ENCODE measurements at regions of chr6 and their contacts with region 1.

Region 1: DNA sequence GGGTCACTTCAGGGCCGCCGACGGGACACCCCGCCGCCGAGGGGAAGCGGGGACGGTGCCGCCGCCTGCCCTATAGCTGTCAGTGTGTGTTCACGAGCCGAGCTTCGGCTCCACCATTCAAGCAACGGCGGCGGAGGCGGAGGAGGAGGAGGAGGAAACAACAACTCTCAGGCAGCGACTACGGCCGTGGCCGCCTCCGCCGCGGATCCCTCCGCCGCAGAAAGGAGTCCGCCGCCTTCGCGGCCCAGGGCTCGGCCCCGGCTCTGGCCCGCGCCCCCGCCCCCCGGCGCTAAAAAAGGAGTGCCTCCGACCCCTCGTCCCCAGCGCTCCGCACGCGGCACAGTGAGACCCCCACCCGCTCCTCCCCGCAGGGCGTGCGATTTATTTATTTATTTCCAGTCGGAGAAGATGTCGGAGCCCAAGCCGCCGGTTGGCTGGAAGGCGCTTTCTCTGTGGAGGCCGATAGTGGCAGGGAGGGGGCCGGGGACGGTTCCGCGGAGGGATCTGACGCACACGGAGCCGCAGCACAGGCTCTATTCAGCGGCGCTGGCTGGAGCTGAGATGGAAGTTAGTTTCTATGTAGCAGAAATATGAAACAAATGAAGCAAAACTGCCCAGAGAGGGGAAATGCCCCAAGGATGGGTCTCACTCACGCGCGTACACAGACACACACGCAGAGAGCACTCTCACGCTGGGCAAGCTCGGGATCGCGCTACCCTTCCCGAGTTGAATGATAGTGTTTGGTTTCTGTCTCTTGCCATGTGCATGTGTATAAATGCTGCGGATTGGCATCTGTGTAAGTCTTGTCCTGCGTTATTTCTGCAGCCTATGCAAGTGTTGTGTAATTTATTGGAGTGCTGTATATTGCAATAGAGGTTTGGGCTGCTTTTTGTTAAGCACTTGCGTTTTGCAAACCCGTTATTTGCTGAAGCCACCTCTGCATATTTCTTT is at the start of gene PHIP:
- DNase-seq: peak; percentile 94
- H3K4me3 ChIP-seq: peak within 1 kb of the TSS; percentile 79
- H3K4me3 Mint-ChIP-seq: peak within 1 kb of the TSS; percentile 88
- H3K27ac Mint-ChIP-seq: peak within 1 kb of the TSS; percentile 96
- H3K4me1 ChIP-seq: no peaks in the 10 kb centered on the region; the same call in 1 of the 2 replicates
- H3K4me1 Mint-ChIP-seq: peaks cover 7% of the 10 kb centered on the region
- H3K27me3 ChIP-seq: no peaks in the 10 kb centered on the region
- H3K27me3 Mint-ChIP-seq: no peaks in the 10 kb centered on the region
- CTCF ChIP-seq: no peak
- total RNA-seq, gene PHIP: 31.2 and 32.6 TPM in 2 replicates

Region 2: DNA sequence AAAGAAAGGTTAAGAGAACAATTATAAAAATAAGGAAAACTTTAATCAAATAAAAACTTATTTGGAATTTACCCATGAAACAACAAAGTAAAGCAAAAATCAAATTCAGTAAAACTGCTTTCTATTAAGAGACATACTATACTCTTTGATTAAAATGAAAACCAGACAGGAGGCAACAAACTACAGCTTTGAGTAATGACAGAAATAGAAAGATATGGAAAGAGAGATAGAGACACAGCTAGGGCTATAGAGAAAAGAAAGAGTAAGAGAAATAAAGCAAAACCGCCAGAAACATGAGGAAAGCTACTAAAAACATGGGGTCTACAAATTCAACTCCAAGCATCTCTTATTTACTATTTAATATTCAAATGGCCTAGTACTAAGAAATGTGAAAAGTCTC is 67.9 kb before region 1 on chr6:
- CTCF ChIA-PET with region 1: no interaction called
- POLR2A ChIA-PET with region 1: no interaction called
- intact Hi-C with region 1: no loop called
- DNase-seq: no peak
- H3K4me3 ChIP-seq: no peak overlapping the region
- H3K4me3 Mint-ChIP-seq: no peak overlapping the region
- H3K27ac Mint-ChIP-seq: no peak overlapping the region
- H3K4me1 ChIP-seq: no peaks in the 10 kb centered on the region
- H3K4me1 Mint-ChIP-seq: no peaks in the 10 kb centered on the region
- H3K27me3 ChIP-seq: no peaks in the 10 kb centered on the region
- H3K27me3 Mint-ChIP-seq: no peaks in the 10 kb centered on the region
- CTCF ChIP-seq: no peak

Region 3: DNA sequence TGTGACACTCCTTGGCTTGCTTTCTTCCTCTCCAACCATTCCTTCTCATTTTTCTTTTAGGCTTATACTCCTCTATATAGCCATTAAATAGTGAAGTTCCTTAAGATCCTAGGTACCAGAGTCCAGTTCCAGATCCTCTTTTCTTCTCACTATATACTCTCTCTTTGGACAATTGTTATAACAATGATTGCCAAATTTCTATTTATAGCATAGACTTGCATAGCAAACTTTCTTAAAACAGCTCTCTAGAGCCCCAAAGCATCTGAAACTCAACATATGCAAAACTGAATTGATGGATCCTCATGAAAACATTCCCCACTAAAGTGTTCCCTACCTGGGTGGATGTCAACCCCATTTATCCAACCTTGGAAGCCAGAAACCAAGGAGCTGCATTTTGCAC is 13.7 kb before region 1 on chr6:
- CTCF ChIA-PET with region 1: no interaction called
- POLR2A ChIA-PET with region 1: interaction called, 10 read pairs
- intact Hi-C with region 1: no loop called
- DNase-seq: no peak
- H3K4me3 ChIP-seq: no peak overlapping the region
- H3K4me3 Mint-ChIP-seq: no peak overlapping the region
- H3K27ac Mint-ChIP-seq: no peak overlapping the region
- H3K4me1 ChIP-seq: no peaks in the 10 kb centered on the region
- H3K4me1 Mint-ChIP-seq: no peaks in the 10 kb centered on the region
- H3K27me3 ChIP-seq: no peaks in the 10 kb centered on the region
- H3K27me3 Mint-ChIP-seq: no peaks in the 10 kb centered on the region
- CTCF ChIP-seq: no peak

Region 4: DNA sequence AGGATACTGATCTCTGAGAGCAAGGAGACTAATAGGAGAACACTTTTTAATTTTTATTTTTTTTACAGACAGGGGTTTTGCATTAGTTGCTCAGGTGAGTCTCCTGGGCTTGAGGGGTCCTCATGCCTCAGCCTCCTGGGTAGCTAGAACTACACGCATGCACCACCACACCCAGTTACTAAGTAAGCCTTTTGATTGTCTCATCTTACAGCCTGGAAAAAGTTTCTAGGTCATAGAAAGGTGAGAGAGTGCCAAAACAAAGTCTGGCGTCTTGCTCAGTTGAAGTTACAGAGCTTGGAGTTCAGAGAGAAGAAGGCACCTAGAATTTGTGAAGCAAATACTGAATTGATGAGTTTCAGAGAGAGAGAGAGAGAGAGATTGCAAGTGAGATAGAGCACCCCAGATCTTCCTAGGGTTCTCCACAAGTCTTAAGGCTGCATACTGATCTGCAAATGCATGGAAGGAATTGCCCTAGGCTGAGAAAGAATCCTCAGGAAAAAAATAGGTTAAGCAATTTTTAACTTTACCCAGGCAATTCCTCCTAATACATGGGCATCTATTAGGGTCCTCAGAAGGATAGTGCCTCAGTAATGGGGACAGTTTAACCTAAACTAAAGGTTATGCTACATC is 37.3 kb after region 1 on chr6:
- CTCF ChIA-PET with region 1: no interaction called
- POLR2A ChIA-PET with region 1: no interaction called
- intact Hi-C with region 1: no loop called
- DNase-seq: no peak
- H3K4me3 ChIP-seq: no peak overlapping the region
- H3K4me3 Mint-ChIP-seq: no peak overlapping the region
- H3K27ac Mint-ChIP-seq: no peak overlapping the region
- H3K4me1 ChIP-seq: no peaks in the 10 kb centered on the region
- H3K4me1 Mint-ChIP-seq: no peaks in the 10 kb centered on the region
- H3K27me3 ChIP-seq: no peaks in the 10 kb centered on the region
- H3K27me3 Mint-ChIP-seq: no peaks in the 10 kb centered on the region
- CTCF ChIP-seq: no peak

Measured in Caco-2 (cell line).